ENCODE measurements at regions of chr3 and their contacts with region 1.

Region 1: DNA sequence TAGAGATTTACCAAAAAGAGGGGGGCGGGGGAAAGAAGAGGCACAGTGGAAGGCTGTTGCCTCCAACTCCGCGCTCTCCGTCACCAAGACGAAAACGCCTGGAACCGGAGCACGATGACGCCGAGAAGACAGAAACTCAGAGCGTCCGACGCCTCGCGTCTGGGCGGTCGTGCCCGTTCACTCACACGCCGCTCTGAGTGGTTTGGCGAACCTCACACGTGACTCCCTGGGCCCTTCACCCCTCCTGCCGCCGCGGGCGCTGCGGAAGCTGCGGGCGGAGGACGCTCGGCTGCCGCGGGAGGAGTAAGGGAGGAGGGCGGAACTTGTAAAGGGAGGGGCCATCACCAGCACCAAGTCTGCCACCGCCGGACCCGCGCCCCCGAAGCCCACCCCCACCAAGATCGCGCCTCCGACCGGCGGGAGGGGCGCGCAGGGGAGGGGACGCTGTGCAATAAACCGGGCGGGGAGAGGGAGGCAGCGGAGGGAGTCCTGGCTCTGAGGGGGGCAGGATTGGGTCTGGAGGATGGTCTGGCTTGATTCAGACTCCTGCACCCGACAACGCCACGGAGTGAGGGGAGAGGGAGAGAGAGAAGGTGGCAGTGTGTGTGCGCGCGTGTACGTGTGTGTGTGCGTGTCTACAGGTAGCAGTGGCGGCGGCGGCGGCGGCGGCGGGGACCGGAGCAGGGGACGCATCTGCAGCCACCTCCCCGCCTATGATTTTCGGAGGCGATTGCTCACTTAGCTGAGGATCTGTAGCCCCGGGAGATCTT is 1.9 kb upstream of the NLGN1 start:
- DNase-seq: peak; percentile 93
- ATAC-seq: peak; percentile 92

Region 2: GRCh38 chr3:172814738-172815137 is 580.9 kb before region 1 on chr3:
- intact Hi-C with region 1: loop called (anchors 10 kb)
- DNase-seq: no peak
- ATAC-seq: peak; percentile 13

Region 3: DNA sequence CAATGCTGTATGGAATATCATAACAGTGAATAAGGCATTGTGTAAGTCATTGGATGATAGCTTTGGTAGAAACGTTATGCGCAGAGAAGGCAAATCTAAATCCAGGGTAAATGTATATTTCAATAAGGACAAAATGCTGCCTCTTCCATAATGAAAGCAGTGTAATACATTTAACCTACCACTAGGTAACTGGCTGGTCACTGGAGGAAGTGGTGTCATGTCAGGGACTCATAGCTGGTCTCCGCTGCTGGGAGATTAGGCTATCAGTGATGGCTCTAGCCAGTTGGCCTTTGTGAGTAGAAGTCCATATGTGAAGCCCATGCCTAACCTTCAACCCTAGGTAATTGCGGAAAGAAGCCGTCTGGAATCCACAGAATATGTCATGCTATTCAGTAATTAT is 142.8 kb after region 1 on chr3:
- intact Hi-C with region 1: no loop called
- DNase-seq: no peak
- ATAC-seq: no peak